CD4-positive, alpha-beta T cell (primary cell): ENCODE measurements at regions of chr1 and their contacts with region 1.

Region 1: GRCh38 chr1:184805667-184806295 is 51.1 kb upstream of the EDEM3 start:
- DNase-seq: peak; percentile 69 to 91 (median 79)
- ATAC-seq: peak; percentile 96
- H3K4me3 ChIP-seq: no peak overlapping the region
- H3K4me3 Mint-ChIP-seq: no peak overlapping the region
- H3K27ac ChIP-seq: no peak overlapping the region
- H3K27ac Mint-ChIP-seq: no peak overlapping the region
- H3K4me1 ChIP-seq: peaks cover 3% of the 10 kb centered on the region
- H3K4me1 Mint-ChIP-seq: no peaks in the 10 kb centered on the region
- H3K27me3 ChIP-seq: no peaks in the 10 kb centered on the region
- H3K27me3 Mint-ChIP-seq: no peaks in the 10 kb centered on the region
- CTCF ChIP-seq: peak; percentile 96

Region 2: DNA sequence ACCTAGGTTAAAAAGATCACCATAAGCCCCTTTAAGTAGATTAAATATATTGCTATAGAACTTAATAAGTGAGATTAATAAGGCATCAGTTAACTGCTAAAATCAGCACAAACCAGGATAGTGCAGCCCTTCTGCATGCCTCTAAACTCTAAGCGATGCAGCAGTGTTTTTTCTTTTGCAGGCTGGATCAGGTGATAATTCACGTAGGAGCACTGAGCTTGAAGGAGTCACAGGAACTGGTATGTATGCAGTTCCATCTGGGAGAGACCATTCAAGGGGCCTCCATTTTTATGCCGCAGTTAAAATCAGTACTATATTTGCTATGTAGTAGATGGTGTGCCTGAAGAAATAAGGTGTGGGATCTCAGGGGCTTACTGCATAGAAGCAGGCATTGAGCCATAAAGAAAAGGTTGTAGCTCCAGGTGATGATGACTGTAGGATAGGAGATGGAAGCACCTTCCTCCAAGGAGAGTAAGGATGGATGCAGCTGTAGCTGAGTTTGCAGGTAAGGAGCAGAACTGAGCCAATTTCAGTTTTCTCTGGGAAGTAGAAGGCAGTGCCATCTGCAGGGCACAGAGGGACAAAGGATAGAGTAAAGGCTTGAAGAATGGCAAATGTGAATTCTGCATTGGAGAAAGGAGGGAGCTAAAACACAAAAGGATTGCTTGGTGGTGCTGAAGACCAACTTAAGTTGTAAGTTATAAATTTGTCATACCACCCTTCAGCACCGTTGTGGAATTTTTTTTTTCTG is 1993.6 kb before region 1 on chr1:
- CTCF ChIA-PET with region 1: no interaction called
- POLR2A ChIA-PET with region 1: no interaction called
- intact Hi-C with region 1: no loop called
- DNase-seq: no peak
- ATAC-seq: no peak
- H3K4me3 ChIP-seq: no peak overlapping the region
- H3K4me3 Mint-ChIP-seq: no peak overlapping the region
- H3K27ac ChIP-seq: no peak overlapping the region
- H3K27ac Mint-ChIP-seq: no peak overlapping the region
- H3K4me1 ChIP-seq: no peaks in the 10 kb centered on the region
- H3K4me1 Mint-ChIP-seq: no peaks in the 10 kb centered on the region
- H3K27me3 ChIP-seq: no peaks in the 10 kb centered on the region
- H3K27me3 Mint-ChIP-seq: no peaks in the 10 kb centered on the region
- CTCF ChIP-seq: no peak

Region 3: GRCh38 chr1:184610876-184611595 is 194.7 kb before region 1 on chr1:
- CTCF ChIA-PET with region 1: no interaction called
- POLR2A ChIA-PET with region 1: no interaction called
- intact Hi-C with region 1: no loop called
- DNase-seq: no peak
- ATAC-seq: no peak
- H3K4me3 ChIP-seq: no peak overlapping the region
- H3K4me3 Mint-ChIP-seq: no peak overlapping the region
- H3K27ac ChIP-seq: no peak overlapping the region
- H3K27ac Mint-ChIP-seq: no peak overlapping the region
- H3K4me1 ChIP-seq: no peaks in the 10 kb centered on the region
- H3K4me1 Mint-ChIP-seq: no peaks in the 10 kb centered on the region
- H3K27me3 ChIP-seq: no peaks in the 10 kb centered on the region
- H3K27me3 Mint-ChIP-seq: no peaks in the 10 kb centered on the region
- CTCF ChIP-seq: no peak

Region 4: DNA sequence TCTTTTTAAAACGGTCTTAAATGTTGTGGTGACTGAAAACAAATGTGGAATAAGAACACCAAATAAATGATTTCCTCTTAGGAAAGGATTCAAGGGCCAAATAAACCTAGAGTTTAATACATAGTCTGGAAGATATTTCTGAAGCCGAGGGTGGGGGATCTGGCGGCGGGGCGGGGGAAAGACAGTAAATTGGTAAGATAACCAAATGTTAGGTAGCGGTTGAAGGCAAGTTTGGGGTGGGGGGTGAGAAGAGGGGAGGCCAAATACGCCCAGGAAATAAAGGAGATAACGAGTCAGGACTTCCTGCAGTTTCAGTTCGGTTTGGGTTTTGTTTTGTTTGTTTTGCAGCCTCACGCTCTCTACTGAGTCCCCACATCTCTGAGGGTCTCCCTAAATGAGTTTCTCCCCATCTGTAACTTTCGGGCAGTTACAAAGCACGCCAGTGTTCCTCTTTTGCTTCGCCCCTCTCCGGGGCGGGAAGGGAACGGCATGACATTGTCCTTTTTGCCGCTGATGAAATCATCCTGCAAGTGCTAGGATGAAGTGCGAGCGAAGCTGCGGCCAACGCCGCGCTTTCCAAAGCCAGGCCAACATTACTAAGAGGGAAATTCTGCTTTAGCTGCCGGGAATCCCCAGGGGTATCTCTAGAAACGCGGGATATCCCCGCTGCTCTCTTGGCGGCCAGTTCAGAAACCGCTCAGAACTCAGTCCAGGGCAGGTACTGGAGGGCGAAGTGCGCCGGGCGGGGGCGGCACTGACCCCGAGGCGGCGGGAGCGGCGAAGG is 167.7 kb after region 1 on chr1:
- CTCF ChIA-PET with region 1: interaction called, 14 read pairs
- POLR2A ChIA-PET with region 1: interaction called, 4 read pairs
- intact Hi-C with region 1: no loop called
- DNase-seq: peak in 9 of 14 experiments; percentile 2 to 93 (median 33)
- ATAC-seq: peak; percentile 19
- H3K4me3 ChIP-seq: peak overlapping the region; percentile 84
- H3K4me3 Mint-ChIP-seq: peak overlapping the region; percentile 97
- H3K27ac ChIP-seq: peak overlapping the region; percentile 52 to 73
- H3K27ac Mint-ChIP-seq: peak overlapping the region; percentile 87
- H3K4me1 ChIP-seq: peaks cover 34% of the 10 kb centered on the region
- H3K4me1 Mint-ChIP-seq: peaks cover 46% of the 10 kb centered on the region
- H3K27me3 ChIP-seq: peaks cover 0 to 2% of the 10 kb centered on the region in 2 experiments
- H3K27me3 Mint-ChIP-seq: peaks cover 8% of the 10 kb centered on the region
- CTCF ChIP-seq: no peak

Region 5: DNA sequence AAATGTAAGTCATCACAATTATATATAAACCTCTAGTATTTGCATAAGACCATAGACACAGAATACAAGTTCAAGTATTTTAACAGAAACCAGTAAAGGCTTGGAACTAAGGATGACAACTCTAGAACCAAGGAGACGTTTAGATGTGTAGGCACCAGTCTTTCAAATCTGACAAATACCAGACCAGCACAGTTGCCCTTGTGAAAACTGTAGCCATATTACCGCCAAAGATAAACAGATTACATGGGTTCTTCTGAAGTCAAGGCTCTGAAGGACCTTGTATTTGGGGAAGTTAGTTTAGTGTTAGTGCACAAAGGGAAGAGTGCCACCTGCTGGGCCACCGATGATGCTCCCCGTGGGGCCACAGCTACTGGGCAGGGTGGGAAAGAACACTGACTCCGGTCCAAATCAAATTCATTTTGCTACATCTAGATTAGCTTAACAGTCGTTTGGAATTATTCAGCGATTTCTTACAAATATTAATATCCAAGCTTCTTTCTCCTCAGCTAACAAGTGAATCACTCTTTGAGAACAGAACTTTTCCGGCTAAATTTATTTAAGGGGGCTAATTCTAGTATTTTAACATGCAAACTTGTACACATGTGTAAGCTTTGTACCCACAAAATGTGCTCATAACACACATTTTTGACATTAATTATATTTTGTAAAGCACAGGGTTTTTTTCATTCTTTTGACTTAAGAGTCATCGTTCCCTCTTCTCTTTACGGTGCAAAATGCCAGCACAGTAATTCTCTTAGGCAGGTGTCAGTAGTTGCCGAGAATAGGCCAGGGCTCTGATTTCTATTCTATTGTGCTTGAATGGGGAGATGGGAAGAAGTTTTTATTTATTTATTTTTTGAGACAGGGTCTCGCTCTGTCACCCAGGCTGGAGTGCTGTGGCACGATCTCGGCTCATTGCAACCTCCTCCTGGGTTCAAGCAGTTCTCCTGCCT is 176.5 kb after region 1 on chr1:
- CTCF ChIA-PET with region 1: interaction called, 21 read pairs
- POLR2A ChIA-PET with region 1: interaction called, 4 read pairs
- intact Hi-C with region 1: loop called (anchors 1 kb)
- DNase-seq: peak; percentile 56 to 87 (median 66)
- ATAC-seq: peak; percentile 96
- H3K4me3 ChIP-seq: no peak overlapping the region
- H3K4me3 Mint-ChIP-seq: no peak overlapping the region
- H3K27ac ChIP-seq: no peak overlapping the region
- H3K27ac Mint-ChIP-seq: no peak overlapping the region
- H3K4me1 ChIP-seq: peaks cover 3% of the 10 kb centered on the region
- H3K4me1 Mint-ChIP-seq: no peaks in the 10 kb centered on the region
- H3K27me3 ChIP-seq: peaks cover 0 to 3% of the 10 kb centered on the region in 2 experiments
- H3K27me3 Mint-ChIP-seq: peaks cover 4% of the 10 kb centered on the region
- CTCF ChIP-seq: peak; percentile 89

Region 6: GRCh38 chr1:185170291-185170848 is 364.6 kb after region 1 on chr1:
- CTCF ChIA-PET with region 1: interaction called, 7 read pairs
- POLR2A ChIA-PET with region 1: interaction called, 8 read pairs
- intact Hi-C with region 1: loop called (anchors 1 to 2 kb)
- DNase-seq: peak in 10 of 14 experiments; percentile 3 to 74 (median 26)
- ATAC-seq: peak; percentile 87
- H3K4me3 ChIP-seq: no peak overlapping the region
- H3K4me3 Mint-ChIP-seq: no peak overlapping the region
- H3K27ac ChIP-seq: no peak overlapping the region
- H3K27ac Mint-ChIP-seq: no peak overlapping the region
- H3K4me1 ChIP-seq: peaks cover 2% of the 10 kb centered on the region
- H3K4me1 Mint-ChIP-seq: peaks cover 10% of the 10 kb centered on the region
- H3K27me3 ChIP-seq: no peaks in the 10 kb centered on the region
- H3K27me3 Mint-ChIP-seq: no peaks in the 10 kb centered on the region
- CTCF ChIP-seq: peak; percentile 80

Region 7: GRCh38 chr1:185681034-185681633 is 875.4 kb after region 1 on chr1:
- CTCF ChIA-PET with region 1: no interaction called
- POLR2A ChIA-PET with region 1: no interaction called
- intact Hi-C with region 1: loop called in 1 of 2 experiments (anchors 5 kb)
- DNase-seq: peak in 5 of 14 experiments; percentile 6 to 74 (median 58)
- ATAC-seq: peak; percentile 62
- H3K4me3 ChIP-seq: no peak overlapping the region
- H3K4me3 Mint-ChIP-seq: no peak overlapping the region
- H3K27ac ChIP-seq: no peak overlapping the region
- H3K27ac Mint-ChIP-seq: no peak overlapping the region
- H3K4me1 ChIP-seq: peaks cover 9% of the 10 kb centered on the region
- H3K4me1 Mint-ChIP-seq: peaks cover 33% of the 10 kb centered on the region
- H3K27me3 ChIP-seq: no peaks in the 10 kb centered on the region
- H3K27me3 Mint-ChIP-seq: no peaks in the 10 kb centered on the region
- CTCF ChIP-seq: peak; percentile 73

Region 8: GRCh38 chr1:185694081-185694480 is 888.3 kb after region 1 on chr1:
- CTCF ChIA-PET with region 1: no interaction called
- POLR2A ChIA-PET with region 1: no interaction called
- intact Hi-C with region 1: loop called (anchors 1 to 5 kb)
- DNase-seq: peak in 5 of 14 experiments; percentile 6 to 64 (median 63)
- ATAC-seq: peak; percentile 44
- H3K4me3 ChIP-seq: peak overlapping the region; percentile 46
- H3K4me3 Mint-ChIP-seq: peak overlapping the region; percentile 78
- H3K27ac ChIP-seq: peak overlapping the region; percentile 45 to 66
- H3K27ac Mint-ChIP-seq: peak overlapping the region; percentile 84
- H3K4me1 ChIP-seq: peaks cover 9% of the 10 kb centered on the region
- H3K4me1 Mint-ChIP-seq: peaks cover 23% of the 10 kb centered on the region
- H3K27me3 ChIP-seq: no peaks in the 10 kb centered on the region
- H3K27me3 Mint-ChIP-seq: peaks cover 5% of the 10 kb centered on the region
- CTCF ChIP-seq: no peak

Region 9: GRCh38 chr1:186212544-186213226 is 1406.9 kb after region 1 on chr1:
- CTCF ChIA-PET with region 1: no interaction called
- POLR2A ChIA-PET with region 1: no interaction called
- intact Hi-C with region 1: loop called (anchors 5 to 10 kb)
- DNase-seq: peak in 4 of 14 experiments; percentile 8 to 57 (median 42)
- ATAC-seq: no peak
- H3K4me3 ChIP-seq: no peak overlapping the region
- H3K4me3 Mint-ChIP-seq: no peak overlapping the region
- H3K27ac ChIP-seq: no peak overlapping the region
- H3K27ac Mint-ChIP-seq: no peak overlapping the region
- H3K4me1 ChIP-seq: no peaks in the 10 kb centered on the region
- H3K4me1 Mint-ChIP-seq: no peaks in the 10 kb centered on the region
- H3K27me3 ChIP-seq: peaks cover 0 to 11% of the 10 kb centered on the region in 2 experiments
- H3K27me3 Mint-ChIP-seq: peaks cover 58% of the 10 kb centered on the region
- CTCF ChIP-seq: peak; percentile 23